ENCODE measurements at regions of chr11 and their contacts with region 1.

Region 1: GRCh38 chr11:107017433-107018227 is 646 bp downstream of the GUCY1A2 start:
- DNase-seq: peak; percentile 66
- H3K4me3 ChIP-seq: peak overlapping the region; percentile 77
- H3K27ac ChIP-seq: no peak overlapping the region
- H3K4me1 ChIP-seq: no peaks in the 10 kb centered on the region
- H3K27me3 ChIP-seq: peaks cover 44% of the 10 kb centered on the region

Region 2: GRCh38 chr11:106063009-106063408 is 954.6 kb before region 1 on chr11:
- in situ Hi-C with region 1: no loop called
- DNase-seq: no peak
- H3K4me3 ChIP-seq: no peak overlapping the region
- H3K27ac ChIP-seq: no peak overlapping the region
- H3K4me1 ChIP-seq: no peaks in the 10 kb centered on the region
- H3K27me3 ChIP-seq: no peaks in the 10 kb centered on the region

Region 3: GRCh38 chr11:106156290-106156937 is 861.2 kb before region 1 on chr11:
- in situ Hi-C with region 1: loop called (anchors 25 kb)
- DNase-seq: peak; percentile 82
- H3K4me3 ChIP-seq: no peak overlapping the region
- H3K27ac ChIP-seq: no peak overlapping the region
- H3K4me1 ChIP-seq: peaks cover 22% of the 10 kb centered on the region
- H3K27me3 ChIP-seq: no peaks in the 10 kb centered on the region

Region 4: GRCh38 chr11:106724293-106724892 is 293.2 kb before region 1 on chr11:
- in situ Hi-C with region 1: loop called (anchors 10 kb)
- DNase-seq: peak; percentile 36
- H3K4me3 ChIP-seq: no peak overlapping the region
- H3K27ac ChIP-seq: no peak overlapping the region
- H3K4me1 ChIP-seq: no peaks in the 10 kb centered on the region
- H3K27me3 ChIP-seq: no peaks in the 10 kb centered on the region; the same call in 1 of the 2 replicates

Region 5: DNA sequence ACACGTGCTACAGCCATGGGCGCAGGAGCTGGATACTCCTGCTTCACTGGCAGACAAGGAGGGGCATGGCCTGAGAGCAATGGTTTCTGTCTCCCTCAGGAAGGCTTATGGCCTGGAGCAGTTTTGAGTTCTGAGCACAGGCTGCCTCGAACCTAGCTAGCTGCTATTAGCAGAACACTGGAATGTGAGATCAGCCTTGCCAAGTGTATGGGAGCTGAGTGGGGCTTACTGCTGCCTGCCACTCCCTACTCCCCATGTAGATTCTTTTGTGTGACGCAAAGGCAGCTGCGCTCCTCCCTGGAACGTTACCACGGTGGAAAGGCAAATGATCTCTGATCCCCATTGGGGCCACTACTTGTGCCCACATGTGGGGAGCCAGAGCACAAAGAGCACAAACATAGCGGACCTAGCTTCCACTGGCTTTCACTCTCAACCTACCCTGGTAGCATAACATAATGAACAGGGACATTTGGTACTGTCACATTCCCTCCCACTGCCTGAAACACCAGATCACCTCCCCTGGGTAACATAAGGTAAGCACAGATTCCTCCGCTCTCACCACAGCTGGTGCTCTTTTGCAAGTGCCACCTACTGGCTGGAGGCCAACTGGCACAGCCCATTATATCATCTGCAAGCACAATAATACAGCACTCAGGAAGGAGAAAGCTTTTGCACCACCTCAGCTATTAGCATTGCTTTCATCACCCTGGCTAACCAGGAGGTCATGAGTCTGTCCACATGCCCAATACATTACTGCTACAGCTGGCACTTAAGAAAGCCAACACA is 85.3 kb after region 1 on chr11:
- in situ Hi-C with region 1: no loop called
- DNase-seq: no peak
- H3K4me3 ChIP-seq: no peak overlapping the region
- H3K27ac ChIP-seq: no peak overlapping the region
- H3K4me1 ChIP-seq: no peaks in the 10 kb centered on the region
- H3K27me3 ChIP-seq: no peaks in the 10 kb centered on the region

Region 6: DNA sequence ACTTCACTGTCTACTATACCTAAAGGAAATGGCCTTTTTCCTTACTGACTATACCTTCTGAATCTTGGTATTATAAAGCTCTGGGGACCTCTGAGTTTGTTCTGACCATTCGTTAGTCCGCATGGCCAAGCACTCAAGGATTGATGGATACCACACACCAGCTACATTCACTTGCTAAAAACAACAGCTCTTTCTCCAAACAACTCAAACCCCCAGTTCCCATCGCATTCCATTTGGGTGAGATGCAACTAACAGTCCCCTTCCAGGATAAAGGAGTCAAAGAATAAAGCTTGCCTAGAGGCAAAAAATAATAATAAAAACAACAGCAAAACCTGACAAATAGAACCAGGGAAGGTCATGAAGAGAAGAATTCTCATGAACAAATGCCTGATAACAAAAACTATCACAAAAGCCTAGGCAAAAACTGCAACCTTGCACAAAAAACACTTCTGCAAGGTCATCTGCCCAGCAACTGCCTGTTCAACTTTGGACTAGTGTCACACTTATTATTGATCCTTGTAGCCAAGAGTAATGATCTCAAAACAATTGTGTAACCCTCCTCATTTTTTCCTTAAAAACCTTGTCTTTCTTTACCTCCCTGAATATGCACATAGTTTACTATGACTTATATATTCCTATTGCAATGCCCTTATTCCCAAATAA is 139.6 kb after region 1 on chr11:
- in situ Hi-C with region 1: no loop called
- DNase-seq: no peak
- H3K4me3 ChIP-seq: no peak overlapping the region
- H3K27ac ChIP-seq: no peak overlapping the region
- H3K4me1 ChIP-seq: no peaks in the 10 kb centered on the region
- H3K27me3 ChIP-seq: 0 out of 2 replicates have a peak, but pooled peaks cover 5% of the 10 kb centered on the region

Measured in GM23248 (cell line).